ENCODE measurements at regions of chr16 and their contacts with region 1.

Region 1: DNA sequence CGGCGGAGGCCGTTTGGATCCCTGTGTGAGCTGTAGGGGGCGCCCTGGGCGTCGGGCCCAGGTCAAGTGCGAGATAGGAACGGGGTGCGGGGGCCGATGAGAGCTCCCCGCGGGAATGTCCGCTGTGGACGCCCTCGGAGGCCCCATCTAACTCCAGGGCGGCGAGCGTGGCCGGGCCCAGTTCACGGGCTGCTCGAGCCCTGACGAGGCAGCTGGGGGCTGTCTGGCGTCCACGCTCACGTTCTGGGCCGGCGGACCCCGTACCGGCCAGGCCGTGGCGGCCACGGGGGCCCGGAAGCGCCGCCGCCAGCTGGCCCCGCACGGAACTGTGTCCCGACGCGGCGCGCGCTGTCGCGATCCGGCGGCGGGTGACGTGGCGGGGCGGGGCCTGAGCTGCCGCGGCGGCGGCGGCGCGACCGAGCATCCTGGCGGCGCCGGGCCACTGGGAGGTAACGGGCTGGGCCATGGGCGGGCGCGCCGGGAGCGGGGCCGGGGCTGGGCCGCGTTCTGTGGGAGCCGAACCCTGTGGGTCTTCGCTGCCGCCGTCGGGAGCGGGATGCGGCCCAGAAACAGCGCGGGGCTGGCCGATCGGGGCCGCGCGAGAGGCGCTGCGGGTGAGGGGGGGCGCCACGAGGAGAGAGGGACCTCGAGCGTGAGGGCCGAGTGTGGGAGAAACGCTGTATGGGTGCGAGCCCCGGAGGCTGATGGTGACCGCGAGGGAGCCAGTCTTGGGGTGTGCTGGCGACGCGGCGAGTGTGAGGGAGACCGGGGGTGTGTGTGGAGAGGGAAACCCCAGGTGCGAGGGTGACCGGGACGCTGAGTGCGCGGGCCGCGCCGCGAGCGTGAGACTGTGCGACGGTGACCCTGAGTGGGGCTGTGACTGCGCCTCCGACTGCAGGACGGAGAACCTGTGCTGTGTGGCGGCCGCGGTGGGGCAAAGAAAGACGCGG is at the start of gene SLC7A6:
- DNase-seq: peak; percentile 92
- ATAC-seq: peak; percentile 71
- H3K4me3 Mint-ChIP-seq: peak within 1 kb of the TSS; percentile 90
- H3K27ac Mint-ChIP-seq: peak within 1 kb of the TSS; percentile 99
- H3K4me1 Mint-ChIP-seq: peaks cover 43% of the 10 kb centered on the region
- H3K27me3 Mint-ChIP-seq: no peaks in the 10 kb centered on the region
- CTCF ChIP-seq: peak; percentile 89
- total RNA-seq, gene SLC7A6: 73.8 to 76.9 TPM

Region 2: DNA sequence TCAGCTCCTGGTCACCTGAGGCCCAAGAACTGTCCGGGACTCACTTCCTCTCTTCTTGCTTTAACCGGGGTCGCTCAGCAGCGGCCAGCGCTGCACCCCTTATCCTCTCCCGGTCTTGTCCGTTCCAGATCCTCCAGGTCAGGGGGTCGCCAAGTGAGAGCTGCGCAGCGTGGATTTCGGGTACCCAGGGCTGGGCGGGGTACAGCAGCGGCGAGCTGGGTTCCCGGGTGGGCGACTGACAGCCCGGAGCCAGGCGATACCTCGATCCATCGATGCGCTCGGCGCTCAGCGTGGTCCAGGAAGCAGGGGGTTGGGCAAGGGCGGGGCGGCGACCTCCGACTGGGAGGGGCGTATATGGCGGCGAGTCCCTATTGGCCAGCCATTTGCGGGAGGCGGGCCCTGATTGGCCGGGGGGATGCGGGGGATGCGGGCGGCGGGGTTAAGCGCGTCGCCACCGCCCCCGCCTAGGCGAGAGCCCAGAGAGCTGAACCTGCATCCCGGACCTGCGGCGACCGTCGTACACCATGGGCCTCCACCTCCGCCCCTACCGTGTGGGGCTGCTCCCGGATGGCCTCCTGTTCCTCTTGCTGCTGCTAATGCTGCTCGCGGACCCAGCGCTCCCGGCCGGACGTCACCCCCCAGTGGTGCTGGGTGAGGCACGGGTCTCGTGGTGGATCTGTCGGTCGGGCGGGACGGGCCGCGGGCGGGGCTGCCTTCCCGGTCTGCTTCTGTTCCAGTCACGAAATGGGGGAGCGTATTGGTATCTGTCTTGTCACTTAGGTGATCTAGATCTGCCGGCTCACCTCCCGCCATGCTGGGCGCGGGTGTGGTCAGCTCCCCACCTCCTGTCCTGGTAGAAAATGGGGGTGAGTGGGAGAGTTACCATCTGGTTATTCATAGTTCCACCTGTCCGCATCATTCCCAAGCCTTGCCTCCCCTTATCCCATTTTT is 19.2 kb before region 1 on chr16 and contains the start of gene PLA2G15:
- CTCF ChIA-PET with region 1: interaction called, 89 read pairs
- POLR2A ChIA-PET with region 1: interaction called, 22 read pairs
- intact Hi-C with region 1: no loop called
- DNase-seq: peak; percentile 97
- ATAC-seq: peak; percentile 99
- H3K4me3 Mint-ChIP-seq: peak within 1 kb of the TSS; percentile 83
- H3K27ac Mint-ChIP-seq: peak within 1 kb of the TSS; percentile 82
- H3K4me1 Mint-ChIP-seq: peaks cover 18% of the 10 kb centered on the region
- H3K27me3 Mint-ChIP-seq: no peaks in the 10 kb centered on the region
- CTCF ChIP-seq: no peak
- total RNA-seq, gene PLA2G15: 6.7 to 6.8 TPM

Region 3: DNA sequence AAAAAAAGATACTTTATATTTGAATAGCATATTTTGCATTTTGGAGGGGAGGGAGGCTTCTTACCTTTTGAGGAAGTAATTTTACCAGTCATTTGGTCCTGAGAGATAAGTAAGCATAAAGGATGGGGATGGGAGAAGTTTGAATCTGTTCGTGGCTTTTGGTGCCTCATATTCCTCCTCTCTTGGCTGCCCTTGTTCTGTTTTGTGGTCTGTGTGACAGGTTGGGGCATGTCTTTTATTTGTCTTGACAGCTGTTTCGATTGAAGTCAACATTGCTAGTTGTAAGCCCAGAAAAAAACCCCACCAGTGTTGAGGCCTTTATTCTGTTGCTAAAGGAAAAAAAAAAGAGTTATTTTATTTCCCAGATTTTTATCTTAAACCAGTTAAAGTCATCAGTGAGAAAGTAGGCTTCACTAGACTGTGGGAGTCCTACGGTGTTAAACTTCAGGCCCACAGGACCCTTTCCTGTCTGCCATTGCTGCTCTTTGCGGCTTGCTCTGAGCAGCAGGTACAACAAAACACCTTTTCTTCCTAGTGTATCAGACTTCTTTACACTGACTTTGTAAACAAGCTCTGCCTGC is 11.3 kb after region 1 on chr16:
- CTCF ChIA-PET with region 1: interaction called, 260 read pairs
- POLR2A ChIA-PET with region 1: interaction called, 42 read pairs
- intact Hi-C with region 1: no loop called
- DNase-seq: peak; percentile 59
- ATAC-seq: peak; percentile 71
- H3K4me3 Mint-ChIP-seq: peak overlapping the region; percentile 3
- H3K27ac Mint-ChIP-seq: peak overlapping the region; percentile 96
- H3K4me1 Mint-ChIP-seq: peaks cover 70% of the 10 kb centered on the region
- H3K27me3 Mint-ChIP-seq: no peaks in the 10 kb centered on the region
- CTCF ChIP-seq: no peak

Region 4: GRCh38 chr16:68289621-68290329 is 25.4 kb after region 1 on chr16:
- CTCF ChIA-PET with region 1: interaction called, 260 read pairs
- POLR2A ChIA-PET with region 1: interaction called, 27 read pairs
- intact Hi-C with region 1: no loop called
- DNase-seq: peak; percentile 89
- ATAC-seq: peak; percentile 89
- H3K4me3 Mint-ChIP-seq: peak overlapping the region; percentile 29
- H3K27ac Mint-ChIP-seq: peak overlapping the region; percentile 95
- H3K4me1 Mint-ChIP-seq: peaks cover 82% of the 10 kb centered on the region
- H3K27me3 Mint-ChIP-seq: no peaks in the 10 kb centered on the region
- CTCF ChIP-seq: no peak

Region 5: DNA sequence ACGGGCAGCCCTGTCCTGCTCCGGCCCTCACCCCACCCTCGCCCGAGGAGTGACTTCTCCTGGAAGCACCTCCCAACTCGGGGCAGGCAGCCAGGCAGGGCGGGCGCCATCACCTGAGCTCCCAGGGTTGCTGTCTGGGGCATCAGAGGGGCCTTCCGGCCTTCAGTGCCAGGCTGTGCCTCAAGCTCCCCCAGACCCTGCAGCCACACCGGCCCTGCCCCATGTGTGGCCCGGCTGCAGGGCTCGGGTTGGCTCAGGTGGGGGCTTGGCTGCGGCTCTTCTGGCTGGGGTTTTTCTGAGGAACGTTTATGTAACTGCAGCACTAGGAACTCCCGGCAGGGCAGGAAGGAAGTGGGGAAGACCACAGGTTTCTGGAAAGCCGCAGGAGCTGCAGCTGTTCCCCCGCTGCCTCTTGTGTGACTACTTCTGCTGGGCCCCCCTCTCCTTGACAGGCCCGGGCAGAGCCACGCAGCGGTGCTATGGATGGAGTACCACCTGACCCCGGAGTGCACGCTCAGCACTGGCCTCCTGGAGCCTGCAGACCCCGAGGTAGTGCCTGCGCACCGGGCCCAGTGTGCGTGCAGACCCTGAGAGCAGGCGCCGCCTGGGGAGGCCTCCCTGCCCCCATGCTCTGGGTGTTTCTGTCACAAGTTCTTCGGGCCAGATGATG is 92.0 kb after region 1 on chr16:
- CTCF ChIA-PET with region 1: interaction called, 26 read pairs
- POLR2A ChIA-PET with region 1: interaction called, 4 read pairs
- intact Hi-C with region 1: no loop called
- DNase-seq: peak; percentile 89
- ATAC-seq: peak; percentile 84
- H3K4me3 Mint-ChIP-seq: peak overlapping the region; percentile 31
- H3K27ac Mint-ChIP-seq: peak overlapping the region; percentile 53
- H3K4me1 Mint-ChIP-seq: peaks cover 34% of the 10 kb centered on the region
- H3K27me3 Mint-ChIP-seq: no peaks in the 10 kb centered on the region
- CTCF ChIP-seq: no peak

Measured in activated CD8-positive, alpha-beta T cell treated with anti-CD3 and anti-CD28 coated beads for 36 hours (primary cell).